CD8-positive, alpha-beta T cell (primary cell): ENCODE measurements at regions of chr10 and their contacts with region 1.

Region 1: GRCh38 chr10:118698421-118698820 is 56.3 kb downstream of the CACUL1 start:
- DNase-seq: peak; percentile 59 to 92 (median 82)
- ATAC-seq: peak; percentile 100
- H3K4me3 ChIP-seq: peak overlapping the region; percentile 10 to 11
- H3K4me3 Mint-ChIP-seq: peak overlapping the region; percentile 75
- H3K27ac ChIP-seq: peak overlapping the region; percentile 18 to 40
- H3K27ac Mint-ChIP-seq: peak overlapping the region; percentile 91
- H3K4me1 ChIP-seq: peaks cover 57% of the 10 kb centered on the region
- H3K4me1 Mint-ChIP-seq: peaks cover 73% of the 10 kb centered on the region
- H3K27me3 ChIP-seq: no peaks in the 10 kb centered on the region
- H3K27me3 Mint-ChIP-seq: no peaks in the 10 kb centered on the region
- CTCF ChIP-seq: no peak

Region 2: DNA sequence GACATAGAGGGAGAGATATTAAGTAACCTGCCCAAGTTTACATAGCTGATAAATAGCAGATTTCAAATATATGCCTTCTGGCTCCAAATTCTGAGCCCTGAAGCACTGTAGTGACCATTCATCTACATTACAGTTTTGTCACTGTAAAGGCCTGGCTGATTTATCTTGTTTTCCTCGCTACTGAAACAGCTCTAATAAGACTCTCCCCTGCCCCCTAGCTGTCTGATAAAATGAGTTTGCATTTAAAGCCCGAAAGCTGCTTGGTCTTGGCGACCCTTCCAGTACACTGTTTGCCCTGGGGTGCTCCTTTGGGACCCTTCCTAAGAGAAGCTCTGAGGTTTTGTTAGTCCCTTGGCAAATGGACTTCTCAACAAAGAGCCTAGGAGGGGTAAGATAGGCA is 592.0 kb before region 1 on chr10:
- CTCF ChIA-PET with region 1: no interaction called
- POLR2A ChIA-PET with region 1: no interaction called
- intact Hi-C with region 1: no loop called
- DNase-seq: peak in 2 of 9 experiments; percentile 2 to 12
- ATAC-seq: no peak
- H3K4me3 ChIP-seq: no peak overlapping the region
- H3K4me3 Mint-ChIP-seq: no peak overlapping the region
- H3K27ac ChIP-seq: no peak overlapping the region
- H3K27ac Mint-ChIP-seq: no peak overlapping the region
- H3K4me1 ChIP-seq: no peaks in the 10 kb centered on the region
- H3K4me1 Mint-ChIP-seq: no peaks in the 10 kb centered on the region
- H3K27me3 ChIP-seq: peaks cover 0 to 2% of the 10 kb centered on the region in 2 experiments
- H3K27me3 Mint-ChIP-seq: peaks cover 8% of the 10 kb centered on the region
- CTCF ChIP-seq: no peak

Region 3: GRCh38 chr10:118658762-118659161 is 39.7 kb before region 1 on chr10:
- CTCF ChIA-PET with region 1: interaction called, 3 read pairs
- POLR2A ChIA-PET with region 1: interaction called, 4 read pairs
- intact Hi-C with region 1: loop called in 1 of 2 experiments (anchors 2 kb)
- DNase-seq: peak in 1 of 9 experiments; percentile 48
- ATAC-seq: no peak
- H3K4me3 ChIP-seq: no peak overlapping the region
- H3K4me3 Mint-ChIP-seq: peak overlapping the region; percentile 8
- H3K27ac ChIP-seq: no peak overlapping the region
- H3K27ac Mint-ChIP-seq: peak overlapping the region; percentile 82
- H3K4me1 ChIP-seq: peaks cover 54% of the 10 kb centered on the region
- H3K4me1 Mint-ChIP-seq: peaks cover 70% of the 10 kb centered on the region
- H3K27me3 ChIP-seq: no peaks in the 10 kb centered on the region
- H3K27me3 Mint-ChIP-seq: peaks cover 3% of the 10 kb centered on the region
- CTCF ChIP-seq: no peak

Region 4: GRCh38 chr10:119892188-119893065 is 1194.0 kb after region 1 on chr10 and contains the start of gene SEC23IP:
- CTCF ChIA-PET with region 1: no interaction called
- POLR2A ChIA-PET with region 1: no interaction called
- intact Hi-C with region 1: loop called in 1 of 2 experiments (anchors 10 kb)
- DNase-seq: peak; percentile 78 to 95 (median 89)
- ATAC-seq: peak; percentile 98
- H3K4me3 ChIP-seq: peak within 1 kb of the TSS; percentile 97 to 98
- H3K4me3 Mint-ChIP-seq: peak within 1 kb of the TSS; percentile 98
- H3K27ac ChIP-seq: peak within 1 kb of the TSS; percentile 84 to 96
- H3K27ac Mint-ChIP-seq: peak within 1 kb of the TSS; percentile 99
- H3K4me1 ChIP-seq: peaks cover 10% of the 10 kb centered on the region
- H3K4me1 Mint-ChIP-seq: peaks cover 46% of the 10 kb centered on the region
- H3K27me3 ChIP-seq: no peaks in the 10 kb centered on the region
- H3K27me3 Mint-ChIP-seq: no peaks in the 10 kb centered on the region
- CTCF ChIP-seq: no peak
- total RNA-seq, gene SEC23IP: 16.2 to 19.8 TPM